ENCODE measurements at regions of chr1 and their contacts with region 1.

Region 1: DNA sequence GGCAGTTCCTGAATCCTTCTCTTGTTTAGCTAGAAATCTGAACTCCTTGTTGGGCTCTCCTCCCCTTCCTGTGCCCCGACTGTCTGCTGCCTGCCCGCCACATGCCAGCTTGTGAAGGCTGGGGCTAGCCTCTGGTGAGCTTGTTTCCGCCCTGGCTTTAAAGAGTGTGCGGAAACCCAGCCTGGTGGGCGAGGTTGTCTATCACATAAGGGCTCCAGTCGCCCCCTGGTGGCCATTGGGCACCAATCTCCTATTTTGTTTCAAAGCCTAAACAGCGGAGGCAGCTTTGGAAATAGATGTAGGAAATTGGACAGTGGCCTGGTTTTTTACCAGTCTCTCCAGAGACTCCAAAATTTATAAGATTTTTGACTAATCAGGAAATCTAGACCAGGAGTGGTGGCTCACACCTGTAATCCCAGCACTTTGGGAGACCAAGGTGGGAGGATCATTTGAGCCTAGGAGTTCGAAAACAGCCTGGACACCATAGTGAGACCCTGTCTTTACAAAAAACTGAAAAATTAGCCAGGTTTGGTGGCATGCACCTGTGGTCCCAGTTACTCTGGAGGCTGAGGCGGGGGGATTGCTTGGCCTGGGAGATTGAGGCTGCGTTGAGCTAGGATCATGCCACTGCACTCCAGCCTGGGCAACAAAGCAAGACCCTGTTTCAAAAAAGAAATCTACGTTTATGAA is 9.8 kb downstream of the ATP8B2 start:
- DNase-seq: peak; percentile 84
- H3K4me3 ChIP-seq: no peak overlapping the region
- H3K27ac ChIP-seq: no peak overlapping the region
- H3K4me1 ChIP-seq: peaks cover 4% of the 10 kb centered on the region
- H3K27me3 ChIP-seq: no peaks in the 10 kb centered on the region
- CTCF ChIP-seq: peak; percentile 84 to 90
- POLR2A ChIP-seq: no peak

Region 2: DNA sequence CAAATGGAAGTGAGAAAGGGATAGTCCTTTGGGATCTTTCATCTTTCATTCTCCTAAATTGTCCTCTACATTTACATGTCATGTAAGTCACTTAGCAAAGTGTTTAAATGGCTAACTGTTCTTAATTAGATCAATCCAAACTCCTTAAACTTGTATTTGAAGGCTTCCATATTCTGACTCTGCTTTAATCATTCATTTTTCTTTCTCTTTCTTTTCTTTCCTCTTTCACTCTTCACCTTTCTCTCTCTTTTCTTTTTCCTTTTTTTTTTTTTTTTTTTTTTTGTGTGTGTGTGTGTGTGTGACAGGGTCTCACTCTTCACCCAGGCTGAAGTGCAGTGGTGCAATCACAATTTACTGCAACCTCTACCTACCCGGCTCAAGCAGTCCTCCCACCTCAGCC is 272.9 kb before region 1 on chr1:
- CTCF ChIA-PET with region 1: no interaction called
- POLR2A ChIA-PET with region 1: no interaction called
- dilution Hi-C with region 1: no loop called
- intact Hi-C with region 1: no loop called
- DNase-seq: no peak
- H3K4me3 ChIP-seq: no peak overlapping the region
- H3K27ac ChIP-seq: no peak overlapping the region
- H3K4me1 ChIP-seq: no peaks in the 10 kb centered on the region
- H3K27me3 ChIP-seq: no peaks in the 10 kb centered on the region
- CTCF ChIP-seq: no peak
- POLR2A ChIP-seq: no peak

Region 3: DNA sequence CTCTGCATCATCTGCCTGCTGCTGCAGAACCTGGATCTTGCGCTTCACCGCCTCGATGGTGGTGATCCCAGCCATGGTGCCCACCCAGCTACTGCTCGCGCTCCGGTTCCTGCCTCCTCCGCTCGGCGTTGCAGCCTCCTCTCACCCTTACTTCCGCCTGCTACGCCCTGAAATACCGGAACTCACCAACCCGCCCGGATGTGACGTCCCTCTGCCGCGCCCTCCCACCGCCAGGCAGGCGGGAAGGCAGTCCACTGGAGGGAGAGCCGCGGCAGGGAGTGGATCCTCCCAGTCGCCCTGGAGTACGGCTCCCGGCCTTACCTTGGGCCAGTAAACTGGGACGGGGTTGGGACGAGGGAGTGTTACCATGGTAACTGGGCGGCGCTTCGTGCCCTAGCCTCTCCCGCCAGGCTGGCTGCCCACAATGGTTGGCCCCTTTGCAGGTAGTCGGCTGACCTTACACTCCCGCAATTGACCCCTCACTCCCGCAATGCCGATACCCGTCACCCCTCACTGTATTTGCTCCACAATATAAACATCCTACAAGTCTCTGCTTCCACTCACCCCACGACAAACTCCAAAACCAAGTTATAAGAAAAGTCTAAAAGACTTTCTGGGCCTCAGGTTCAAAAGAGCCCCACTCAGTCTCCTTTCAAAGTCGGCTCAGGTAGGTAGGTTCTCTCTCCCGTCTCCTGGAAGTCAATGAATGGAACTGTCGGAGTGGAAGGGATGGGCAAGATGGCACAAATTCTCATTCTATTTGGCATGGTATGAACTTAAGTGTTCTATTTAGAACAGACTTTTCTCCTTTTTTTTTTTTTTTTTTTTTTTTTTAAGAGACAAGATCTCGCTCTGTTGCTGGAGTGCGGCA is 151.9 kb before region 1 on chr1:
- CTCF ChIA-PET with region 1: interaction called, 11 read pairs
- POLR2A ChIA-PET with region 1: no interaction called
- dilution Hi-C with region 1: no loop called
- intact Hi-C with region 1: loop called (anchors 1 kb)
- DNase-seq: peak; percentile 95
- H3K4me3 ChIP-seq: peak overlapping the region; percentile 87 to 99 (median 93)
- H3K27ac ChIP-seq: peak overlapping the region; percentile 64
- H3K4me1 ChIP-seq: peaks cover 30% of the 10 kb centered on the region
- H3K27me3 ChIP-seq: peaks cover 0 to 3% of the 10 kb centered on the region in 2 experiments
- CTCF ChIP-seq: no peak
- POLR2A ChIP-seq: peak; percentile 72

Region 4: GRCh38 chr1:154198756-154199562 is 136.2 kb before region 1 on chr1:
- CTCF ChIA-PET with region 1: interaction called, 49 read pairs
- POLR2A ChIA-PET with region 1: no interaction called
- dilution Hi-C with region 1: no loop called
- intact Hi-C with region 1: loop called (anchors 1 kb)
- DNase-seq: peak; percentile 78
- H3K4me3 ChIP-seq: no peak overlapping the region
- H3K27ac ChIP-seq: no peak overlapping the region
- H3K4me1 ChIP-seq: no peaks in the 10 kb centered on the region
- H3K27me3 ChIP-seq: peaks cover 3 to 4% of the 10 kb centered on the region in 2 experiments
- CTCF ChIP-seq: peak; percentile 31 to 56
- POLR2A ChIP-seq: no peak

Region 5: DNA sequence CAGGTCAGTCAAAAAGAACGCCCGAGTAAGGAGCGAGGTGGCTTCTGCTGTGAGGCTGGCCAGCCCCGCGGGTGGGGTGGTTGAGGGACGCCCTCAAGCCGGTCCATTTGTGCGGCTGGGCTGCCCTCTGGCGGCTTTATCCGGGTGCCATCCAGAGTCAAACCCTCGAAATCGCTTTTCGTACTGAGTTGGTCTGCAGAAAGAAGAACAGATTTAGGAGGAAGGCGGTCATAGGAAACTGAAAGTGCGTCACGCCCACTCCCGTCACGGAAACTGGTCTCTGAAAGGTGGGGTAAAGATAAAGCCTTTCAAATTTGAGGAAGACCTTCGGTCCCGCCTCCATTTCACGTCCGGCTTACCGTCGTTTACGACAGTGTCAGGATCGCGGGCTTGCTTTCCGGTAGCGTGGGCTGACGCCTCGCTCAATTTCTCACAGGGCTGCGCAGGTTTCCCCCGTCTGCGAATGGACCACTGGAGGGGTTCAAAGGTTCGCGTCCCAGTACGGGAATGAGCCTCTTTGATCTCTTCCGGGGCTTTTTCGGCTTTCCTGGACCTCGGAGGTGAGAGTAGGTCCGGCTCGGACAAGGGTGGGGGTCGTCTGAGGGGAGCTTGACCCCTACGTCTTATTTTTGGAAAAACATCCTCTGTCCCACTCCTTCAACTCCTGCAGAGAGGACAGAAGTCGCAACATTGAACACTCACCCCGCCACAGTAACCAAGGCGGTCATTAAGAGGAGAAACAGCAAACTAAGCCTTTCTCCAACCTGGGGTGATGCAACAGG is 62.8 kb before region 1 on chr1 and contains the start of gene HAX1:
- CTCF ChIA-PET with region 1: interaction called, 55 read pairs
- POLR2A ChIA-PET with region 1: no interaction called
- dilution Hi-C with region 1: no loop called
- intact Hi-C with region 1: loop called (anchors 1 kb)
- DNase-seq: peak; percentile 97
- H3K4me3 ChIP-seq: peak within 1 kb of the TSS; percentile 79 to 91 (median 81)
- H3K27ac ChIP-seq: peak within 1 kb of the TSS; percentile 69
- H3K4me1 ChIP-seq: peaks cover 15% of the 10 kb centered on the region
- H3K27me3 ChIP-seq: no peaks in the 10 kb centered on the region
- CTCF ChIP-seq: peak; percentile 81
- POLR2A ChIP-seq: peak; percentile 71
- total RNA-seq, gene HAX1: 69.1 and 78.4 TPM in 2 replicates

Region 6: DNA sequence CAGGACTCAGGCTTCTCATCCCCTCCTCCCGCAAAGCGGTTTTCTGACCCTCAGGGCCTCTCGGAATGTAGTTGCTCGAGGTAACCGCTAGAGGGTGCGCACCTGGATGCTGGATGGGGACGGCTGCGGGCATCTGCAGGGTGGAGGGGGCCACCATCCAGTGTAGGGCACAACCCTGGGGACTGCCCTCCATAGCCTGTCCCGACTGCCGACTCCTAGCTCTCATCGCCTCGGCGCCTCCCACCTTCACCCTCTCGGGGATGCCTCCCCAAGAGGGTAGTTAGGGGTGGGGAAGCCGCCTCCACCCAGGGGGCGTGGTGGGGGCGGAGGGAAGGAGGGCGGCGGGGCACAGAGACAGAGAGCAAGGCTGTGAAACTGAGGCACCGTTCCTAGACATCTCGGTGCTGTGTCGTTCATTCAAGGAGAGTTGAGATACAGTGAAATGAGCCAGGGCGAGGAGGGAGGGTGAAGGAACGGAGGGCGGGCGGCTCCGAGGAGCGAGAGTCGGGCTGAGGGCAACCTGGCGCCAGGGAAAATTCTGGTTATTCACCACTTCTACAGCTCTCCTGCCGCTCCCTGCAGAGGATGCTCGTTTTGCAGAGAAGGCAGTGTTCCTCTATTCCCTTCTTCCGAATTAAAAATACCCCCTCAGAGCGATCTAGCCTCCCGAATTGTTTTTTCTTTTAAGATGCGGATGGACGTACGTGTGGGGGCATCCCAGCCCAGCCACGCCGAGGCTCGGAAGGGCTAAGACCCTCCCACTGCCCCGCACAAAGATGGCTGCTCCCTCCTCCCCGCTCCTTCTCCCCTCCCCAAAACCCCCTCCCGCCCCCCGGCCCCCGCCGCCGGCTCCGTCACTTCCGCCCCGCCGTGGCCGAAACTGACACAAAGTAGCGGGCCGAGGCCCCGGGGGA is 10.2 kb before region 1 on chr1 and contains the start of gene ATP8B2:
- CTCF ChIA-PET with region 1: interaction called, 210 read pairs
- POLR2A ChIA-PET with region 1: interaction called, 4 read pairs
- dilution Hi-C with region 1: no loop called
- intact Hi-C with region 1: loop called (anchors 1 kb)
- DNase-seq: peak; percentile 79
- H3K4me3 ChIP-seq: peak within 1 kb of the TSS; percentile 78 to 88 (median 85)
- H3K27ac ChIP-seq: peak within 1 kb of the TSS; percentile 52
- H3K4me1 ChIP-seq: peaks cover 22% of the 10 kb centered on the region
- H3K27me3 ChIP-seq: peaks cover 0 to 8% of the 10 kb centered on the region in 2 experiments
- CTCF ChIP-seq: peak; percentile 93 to 94
- POLR2A ChIP-seq: no peak
- total RNA-seq, gene ATP8B2: 60.0 and 64.7 TPM in 2 replicates

Region 7: GRCh38 chr1:154352581-154353459 is 17.6 kb after region 1 on chr1:
- CTCF ChIA-PET with region 1: interaction called, 67 read pairs
- POLR2A ChIA-PET with region 1: no interaction called
- dilution Hi-C with region 1: no loop called
- intact Hi-C with region 1: no loop called
- DNase-seq: peak; percentile 56
- H3K4me3 ChIP-seq: peak overlapping the region in 2 of 3 experiments; percentile 19 to 46
- H3K27ac ChIP-seq: no peak overlapping the region
- H3K4me1 ChIP-seq: peaks cover 14% of the 10 kb centered on the region
- H3K27me3 ChIP-seq: no peaks in the 10 kb centered on the region
- CTCF ChIP-seq: peak in 1 of 2 donors; percentile 1
- POLR2A ChIP-seq: no peak

Region 8: DNA sequence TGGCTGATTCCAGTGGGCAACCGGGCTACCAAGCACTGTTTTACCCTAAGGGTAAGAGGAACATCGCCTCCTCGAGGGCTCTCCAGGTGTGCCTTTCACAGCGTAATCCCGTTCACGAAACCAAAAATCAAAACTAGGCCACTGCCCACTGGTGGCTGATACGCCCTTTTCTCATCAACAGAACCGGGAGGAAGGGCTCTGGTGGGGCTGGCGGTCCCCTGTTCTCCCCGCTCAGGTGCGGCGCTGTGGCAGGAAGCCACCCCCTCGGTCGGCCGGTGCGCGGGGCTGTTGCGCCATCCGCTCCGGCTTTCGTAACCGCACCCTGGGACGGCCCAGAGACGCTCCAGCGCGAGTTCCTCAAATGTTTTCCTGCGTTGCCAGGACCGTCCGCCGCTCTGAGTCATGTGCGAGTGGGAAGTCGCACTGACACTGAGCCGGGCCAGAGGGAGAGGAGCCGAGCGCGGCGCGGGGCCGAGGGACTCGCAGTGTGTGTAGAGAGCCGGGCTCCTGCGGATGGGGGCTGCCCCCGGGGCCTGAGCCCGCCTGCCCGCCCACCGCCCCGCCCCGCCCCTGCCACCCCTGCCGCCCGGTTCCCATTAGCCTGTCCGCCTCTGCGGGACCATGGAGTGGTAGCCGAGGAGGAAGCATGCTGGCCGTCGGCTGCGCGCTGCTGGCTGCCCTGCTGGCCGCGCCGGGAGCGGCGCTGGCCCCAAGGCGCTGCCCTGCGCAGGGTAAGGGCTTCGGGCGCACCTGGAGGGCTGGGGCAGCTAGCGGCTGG is 70.0 kb after region 1 on chr1 and contains the start of gene IL6R:
- CTCF ChIA-PET with region 1: interaction called, 11 read pairs
- POLR2A ChIA-PET with region 1: no interaction called
- dilution Hi-C with region 1: no loop called
- intact Hi-C with region 1: no loop called
- DNase-seq: peak; percentile 83
- H3K4me3 ChIP-seq: peak within 1 kb of the TSS; percentile 6 to 49 (median 36)
- H3K27ac ChIP-seq: peak within 1 kb of the TSS; percentile 18
- H3K4me1 ChIP-seq: peaks cover 13% of the 10 kb centered on the region
- H3K27me3 ChIP-seq: no peaks in the 10 kb centered on the region
- CTCF ChIP-seq: peak; percentile 28 to 42
- POLR2A ChIP-seq: no peak
- total RNA-seq, gene IL6R: 3.3 and 4.8 TPM in 2 replicates

Measured in endothelial cell of umbilical vein (primary cell).